ENCODE measurements at regions of chr9 and their contacts with region 1.

Region 1: GRCh38 chr9:71604197-71605063 is 163.9 kb downstream of the CEMIP2 start:
- DNase-seq: peak; percentile 64
- ATAC-seq: peak; percentile 92
- H3K4me3 ChIP-seq: no peak overlapping the region
- H3K27ac ChIP-seq: no peak overlapping the region
- H3K4me1 ChIP-seq: peaks cover 11% of the 10 kb centered on the region
- H3K27me3 ChIP-seq: no peaks in the 10 kb centered on the region
- CTCF ChIP-seq: peak; percentile 86
- EP300 ChIP-seq: no peak
- POLR2A ChIP-seq: no peak
- RAD21 ChIP-seq: peak; percentile 74

Region 2: GRCh38 chr9:71662057-71662456 is 57.6 kb after region 1 on chr9:
- CTCF ChIA-PET with region 1: no interaction called
- POLR2A ChIA-PET with region 1: no interaction called
- in situ Hi-C with region 1: no loop called
- intact Hi-C with region 1: no loop called
- DNase-seq: no peak
- ATAC-seq: no peak
- H3K4me3 ChIP-seq: no peak overlapping the region
- H3K27ac ChIP-seq: no peak overlapping the region
- H3K4me1 ChIP-seq: peaks cover 22% of the 10 kb centered on the region
- H3K27me3 ChIP-seq: no peaks in the 10 kb centered on the region
- CTCF ChIP-seq: no peak
- EP300 ChIP-seq: no peak
- POLR2A ChIP-seq: no peak
- RAD21 ChIP-seq: no peak

Region 3: GRCh38 chr9:71675129-71675856 is 70.9 kb after region 1 on chr9:
- CTCF ChIA-PET with region 1: no interaction called
- POLR2A ChIA-PET with region 1: no interaction called
- in situ Hi-C with region 1: no loop called
- intact Hi-C with region 1: loop called (anchors 1 kb)
- DNase-seq: no peak
- ATAC-seq: no peak
- H3K4me3 ChIP-seq: no peak overlapping the region
- H3K27ac ChIP-seq: no peak overlapping the region
- H3K4me1 ChIP-seq: peaks cover 59% of the 10 kb centered on the region
- H3K27me3 ChIP-seq: no peaks in the 10 kb centered on the region; a peak in 1 of 5 replicates
- CTCF ChIP-seq: no peak
- EP300 ChIP-seq: no peak
- POLR2A ChIP-seq: no peak
- RAD21 ChIP-seq: no peak

Region 4: GRCh38 chr9:71710856-71711255 is 106.4 kb after region 1 on chr9:
- CTCF ChIA-PET with region 1: interaction called, 9 read pairs
- POLR2A ChIA-PET with region 1: no interaction called
- in situ Hi-C with region 1: no loop called
- intact Hi-C with region 1: loop called (anchors 5 kb)
- DNase-seq: no peak
- ATAC-seq: no peak
- H3K4me3 ChIP-seq: no peak overlapping the region
- H3K27ac ChIP-seq: no peak overlapping the region
- H3K4me1 ChIP-seq: no peaks in the 10 kb centered on the region
- H3K27me3 ChIP-seq: no peaks in the 10 kb centered on the region
- CTCF ChIP-seq: no peak
- EP300 ChIP-seq: no peak
- POLR2A ChIP-seq: no peak
- RAD21 ChIP-seq: no peak

Measured in HepG2 (cell line).